KBM-7 (cell line): ENCODE measurements at regions of chr9 and their contacts with region 1.

Region 1: DNA sequence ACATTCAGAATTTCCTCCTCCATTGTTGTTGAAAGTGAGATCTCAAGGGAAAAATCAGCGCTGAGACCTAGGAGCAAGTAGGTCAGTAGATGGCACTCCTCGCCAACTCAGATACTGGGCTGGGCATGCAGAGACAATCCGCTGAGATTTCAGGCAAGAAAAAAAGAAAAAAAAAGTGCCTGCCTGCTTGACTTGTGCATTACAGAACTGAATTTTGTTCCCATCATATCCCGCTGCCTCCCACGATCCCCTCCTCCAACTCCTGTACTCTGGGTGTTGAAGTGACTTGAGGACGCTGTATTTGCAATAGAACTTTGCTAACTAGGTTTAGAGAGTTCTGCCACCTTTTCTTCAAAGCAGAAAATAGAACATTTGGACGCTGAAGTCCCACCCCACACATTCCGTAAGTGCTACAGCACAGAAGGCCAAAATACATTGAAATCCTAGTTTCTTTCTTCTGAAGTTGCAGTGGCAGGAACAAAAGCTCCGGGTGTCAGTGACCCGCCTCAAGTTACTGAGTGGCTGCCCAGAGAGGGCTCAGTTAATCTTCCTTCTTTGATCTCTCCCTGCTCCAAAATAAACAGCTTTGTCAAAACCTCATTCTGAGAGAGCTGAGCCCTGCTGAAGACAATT is 265.8 kb downstream of the MLLT3 start:
- DNase-seq: peak; percentile 76

Region 2: DNA sequence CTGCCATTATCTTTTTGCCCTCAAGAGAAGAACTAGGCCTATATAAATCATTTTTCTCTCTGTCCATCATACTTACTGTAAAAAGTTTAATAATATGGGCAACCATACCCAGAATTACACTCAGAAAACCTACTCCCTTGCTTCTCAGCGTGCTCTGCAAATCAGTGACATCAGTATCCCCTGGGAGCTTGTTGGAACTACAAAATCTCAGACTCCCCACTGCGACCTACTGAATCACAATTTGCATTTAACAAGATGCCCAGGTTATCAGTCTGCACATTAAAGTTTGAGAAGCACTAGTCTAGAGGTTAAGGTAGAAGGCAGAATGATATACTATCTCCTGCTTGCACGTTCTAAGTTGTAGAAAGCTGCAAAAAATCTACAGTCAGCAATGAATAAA is 138.6 kb after region 1 on chr9:
- in situ Hi-C with region 1: no loop called
- DNase-seq: no peak

Region 3: GRCh38 chr9:21110708-21111576 is 754.4 kb after region 1 on chr9:
- in situ Hi-C with region 1: loop called (anchors 25 kb)
- DNase-seq: peak; percentile 81